ENCODE measurements at regions of chr1 and their contacts with region 1.

Region 1: DNA sequence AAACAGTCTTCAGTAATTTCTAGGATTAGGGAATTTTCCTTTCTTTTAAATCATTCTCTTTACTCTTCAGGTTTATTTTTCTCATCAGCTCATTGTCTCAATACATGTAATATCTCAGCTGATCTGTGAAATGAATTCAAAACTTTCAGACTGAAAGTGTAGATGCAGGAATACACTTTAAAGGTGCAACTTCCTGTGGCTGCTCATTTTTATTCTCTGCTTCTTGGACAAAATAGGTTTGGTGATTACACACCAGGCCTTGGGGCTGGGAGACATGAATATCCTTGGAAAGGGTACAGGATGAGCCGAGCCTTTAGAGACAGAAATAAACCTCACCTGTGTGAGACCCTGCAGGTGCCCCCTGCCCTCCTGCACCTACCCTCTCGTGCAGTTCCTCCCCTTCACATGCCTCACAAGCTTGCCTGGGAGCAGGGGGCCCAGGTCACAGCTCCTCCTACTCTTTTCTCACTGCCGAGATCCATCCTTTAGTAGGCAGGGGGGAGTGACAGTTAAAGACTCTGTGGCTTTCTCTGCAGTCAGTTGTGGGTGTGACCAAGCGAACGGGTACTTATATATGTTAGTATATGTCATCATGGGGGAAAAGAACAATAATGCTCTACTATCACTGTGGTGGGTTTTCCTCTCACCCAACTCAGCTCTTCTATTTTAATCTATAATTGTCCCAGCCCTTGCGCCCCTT is 23.6 kb downstream of the XCL2 start:
- DNase-seq: peak; percentile 68
- ATAC-seq: peak; percentile 87
- H3K4me3 Mint-ChIP-seq: peak overlapping the region; percentile 83
- H3K27ac Mint-ChIP-seq: peak overlapping the region; percentile 90
- H3K4me1 Mint-ChIP-seq: peaks cover 62% of the 10 kb centered on the region
- H3K27me3 Mint-ChIP-seq: no peaks in the 10 kb centered on the region

Region 2: DNA sequence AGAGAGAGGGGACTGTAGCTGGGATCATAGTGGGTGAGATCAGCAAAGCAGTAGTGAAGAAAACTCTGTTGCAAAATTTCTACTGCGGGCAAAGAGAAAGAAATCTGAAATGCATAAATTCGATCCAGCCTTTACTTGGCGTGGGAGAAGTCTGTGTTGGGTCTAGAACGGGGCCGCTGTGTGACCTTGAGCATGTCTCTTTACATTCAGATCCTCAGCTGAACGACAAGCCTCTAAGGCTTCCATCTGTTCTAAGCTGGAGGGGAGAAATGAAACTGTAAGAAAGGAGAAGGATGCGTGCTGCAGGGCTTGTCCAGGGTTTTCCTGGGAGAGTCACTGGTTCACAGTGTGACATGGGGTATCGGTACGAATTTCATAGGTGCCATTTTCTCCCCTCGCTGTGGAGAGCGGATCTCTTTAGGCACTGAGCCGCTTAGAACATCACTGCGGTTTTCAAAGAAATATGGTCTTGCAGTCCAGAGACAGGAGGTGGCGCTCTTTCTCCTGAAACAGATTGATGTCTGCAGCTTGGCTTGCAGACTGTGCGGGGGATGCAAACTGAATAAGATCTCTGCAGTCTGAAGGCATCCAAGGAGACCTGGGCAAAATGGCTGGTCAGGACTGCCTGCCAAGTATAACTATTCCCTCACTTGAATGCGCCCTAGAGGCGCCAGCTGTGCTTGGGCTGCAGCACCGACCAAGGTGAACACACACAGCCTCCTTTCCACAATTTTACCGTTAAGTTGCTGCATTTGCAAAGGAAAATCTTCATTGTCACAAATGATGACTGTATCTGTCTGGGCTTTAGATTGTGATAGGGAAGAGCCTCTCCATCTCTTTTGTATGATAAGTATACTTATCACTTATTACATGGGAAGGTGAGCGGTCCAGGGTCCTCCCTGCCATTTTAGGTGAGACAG is 80.5 kb before region 1 on chr1:
- POLR2A ChIA-PET with region 1: interaction called, 32 read pairs
- DNase-seq: peak; percentile 75
- ATAC-seq: peak; percentile 80
- H3K4me3 Mint-ChIP-seq: peak overlapping the region; percentile 74
- H3K27ac Mint-ChIP-seq: peak overlapping the region; percentile 85
- H3K4me1 Mint-ChIP-seq: peaks cover 56% of the 10 kb centered on the region
- H3K27me3 Mint-ChIP-seq: no peaks in the 10 kb centered on the region

Region 3: DNA sequence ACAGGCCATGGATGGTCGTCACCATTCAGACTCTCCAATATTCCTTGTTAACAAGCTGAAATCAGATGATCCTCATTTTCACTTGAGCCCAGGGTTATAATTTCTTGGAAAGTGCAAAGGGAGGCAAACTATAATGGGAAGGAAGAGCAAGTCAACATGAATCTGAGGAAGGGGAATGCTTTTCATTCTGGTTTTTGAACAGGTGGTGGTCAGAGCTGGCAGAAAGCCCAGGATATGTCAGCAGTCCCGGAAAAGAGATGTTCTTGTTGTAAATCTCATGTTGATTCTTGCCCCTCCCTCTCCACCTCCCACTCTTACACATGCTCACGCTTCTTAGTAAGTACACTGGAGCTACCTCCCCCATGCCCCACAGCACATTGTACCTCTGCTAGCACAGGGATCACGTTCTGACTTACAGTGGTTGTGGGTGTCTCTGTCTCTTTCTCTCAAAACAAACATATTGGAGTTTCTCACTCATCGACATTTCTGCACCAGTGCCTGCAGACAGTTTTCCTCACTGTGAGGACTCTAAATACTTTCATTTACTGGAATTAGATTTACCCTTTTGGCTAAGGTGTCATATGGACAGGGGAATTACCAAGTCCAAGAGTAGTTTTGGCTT is 54.0 kb before region 1 on chr1:
- POLR2A ChIA-PET with region 1: interaction called, 10 read pairs
- DNase-seq: no peak
- ATAC-seq: peak; percentile 88
- H3K4me3 Mint-ChIP-seq: peak overlapping the region; percentile 66
- H3K27ac Mint-ChIP-seq: peak overlapping the region; percentile 93
- H3K4me1 Mint-ChIP-seq: peaks cover 68% of the 10 kb centered on the region
- H3K27me3 Mint-ChIP-seq: no peaks in the 10 kb centered on the region

Region 4: DNA sequence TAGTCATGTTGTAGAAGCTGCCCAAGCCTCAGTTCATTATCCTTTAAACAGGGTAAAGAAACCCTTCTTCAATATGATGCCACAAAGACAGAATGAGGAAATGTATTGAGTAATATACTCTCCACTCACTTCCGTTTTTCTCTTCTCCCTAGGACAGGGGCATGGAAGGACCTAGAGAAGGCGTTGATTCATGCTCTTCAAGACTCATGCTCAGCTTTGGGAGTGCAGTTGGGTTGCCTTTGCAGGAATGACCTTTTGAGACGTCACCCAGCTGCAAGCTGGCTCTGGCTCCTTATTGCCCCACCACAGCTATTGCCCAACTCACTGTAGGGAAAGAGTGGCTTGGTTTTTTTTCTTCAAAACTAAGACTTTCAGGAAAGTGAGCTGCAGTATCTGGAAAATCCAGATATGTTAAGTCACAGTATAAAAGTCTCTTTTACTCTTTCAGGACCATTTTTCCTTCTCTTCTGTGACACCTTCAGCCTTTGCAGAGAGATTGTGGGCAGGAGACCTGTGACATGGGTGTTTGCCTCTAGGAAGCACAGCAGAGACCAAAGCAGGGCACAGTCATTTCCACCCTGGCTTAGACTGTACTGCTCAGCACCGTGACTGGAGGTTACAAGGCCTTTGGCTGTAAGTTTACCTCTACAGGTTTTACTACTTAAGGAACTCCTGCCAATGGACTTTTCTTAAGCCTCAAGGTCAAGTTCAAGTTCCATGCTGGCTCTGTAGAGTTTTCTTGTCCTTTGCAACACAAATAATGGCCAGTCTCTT is 16.0 kb before region 1 on chr1:
- POLR2A ChIA-PET with region 1: interaction called, 10 read pairs
- DNase-seq: no peak
- ATAC-seq: peak; percentile 99
- H3K4me3 Mint-ChIP-seq: peak overlapping the region; percentile 25
- H3K27ac Mint-ChIP-seq: peak overlapping the region; percentile 80
- H3K4me1 Mint-ChIP-seq: peaks cover 71% of the 10 kb centered on the region
- H3K27me3 Mint-ChIP-seq: no peaks in the 10 kb centered on the region

Region 5: GRCh38 chr1:168535536-168535935 is 15.3 kb after region 1 on chr1:
- POLR2A ChIA-PET with region 1: interaction called, 45 read pairs
- DNase-seq: no peak
- ATAC-seq: peak; percentile 87
- H3K4me3 Mint-ChIP-seq: peak overlapping the region; percentile 67
- H3K27ac Mint-ChIP-seq: peak overlapping the region; percentile 92
- H3K4me1 Mint-ChIP-seq: peaks cover 59% of the 10 kb centered on the region
- H3K27me3 Mint-ChIP-seq: peaks cover 2% of the 10 kb centered on the region